Activated naive CD4-positive, alpha-beta T cell treated with anti-CD3 and anti-CD28 coated beads for 36 hours (primary cell): ENCODE measurements at regions of chr12 and their contacts with region 1.

Region 1: GRCh38 chr12:51025836-51026638 is at the start of gene SLC11A2:
- DNase-seq: peak; percentile 96
- H3K4me3 Mint-ChIP-seq: peak within 1 kb of the TSS; percentile 85
- H3K27ac Mint-ChIP-seq: peak within 1 kb of the TSS; percentile 93
- H3K4me1 Mint-ChIP-seq: peaks cover 54% of the 10 kb centered on the region
- H3K27me3 Mint-ChIP-seq: no peaks in the 10 kb centered on the region
- total RNA-seq, gene SLC11A2: 18.6 to 27.0 TPM

Region 2: GRCh38 chr12:49043856-49044258 is 1982.2 kb before region 1 on chr12:
- CTCF ChIA-PET with region 1: no interaction called
- intact Hi-C with region 1: no loop called
- DNase-seq: peak; percentile 85
- H3K4me3 Mint-ChIP-seq: no peak overlapping the region
- H3K27ac Mint-ChIP-seq: no peak overlapping the region
- H3K4me1 Mint-ChIP-seq: peaks cover 2% of the 10 kb centered on the region
- H3K27me3 Mint-ChIP-seq: no peaks in the 10 kb centered on the region

Region 3: DNA sequence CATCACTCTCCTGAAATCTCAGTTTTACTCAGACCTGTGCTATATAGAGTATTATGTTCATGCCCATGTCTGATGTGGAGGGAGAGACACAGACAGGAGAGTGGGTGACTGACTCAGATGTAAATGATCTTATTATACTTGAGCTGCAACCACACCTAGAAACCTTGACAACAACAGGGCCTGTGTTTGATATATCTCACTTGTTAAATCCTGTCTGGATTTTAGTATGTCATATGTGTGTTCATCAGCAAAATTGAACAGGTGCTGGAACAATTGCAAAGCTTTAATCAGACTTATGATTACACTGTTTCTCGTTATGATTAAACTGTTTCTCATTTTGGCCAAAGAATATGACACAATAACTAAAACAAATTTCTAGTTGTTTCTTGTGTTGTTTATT is 483.6 kb before region 1 on chr12:
- CTCF ChIA-PET with region 1: no interaction called
- intact Hi-C with region 1: loop called (anchors 1 kb)
- DNase-seq: peak; percentile 64
- H3K4me3 Mint-ChIP-seq: no peak overlapping the region
- H3K27ac Mint-ChIP-seq: peak overlapping the region; percentile 85
- H3K4me1 Mint-ChIP-seq: peaks cover 55% of the 10 kb centered on the region
- H3K27me3 Mint-ChIP-seq: no peaks in the 10 kb centered on the region

Region 4: GRCh38 chr12:50763639-50764285 is 262.3 kb before region 1 on chr12 and contains the start of gene ATF1:
- CTCF ChIA-PET with region 1: interaction called, 41 read pairs
- intact Hi-C with region 1: loop called (anchors 1 kb)
- DNase-seq: peak; percentile 91
- H3K4me3 Mint-ChIP-seq: peak within 1 kb of the TSS; percentile 83
- H3K27ac Mint-ChIP-seq: peak within 1 kb of the TSS; percentile 94
- H3K4me1 Mint-ChIP-seq: peaks cover 33% of the 10 kb centered on the region
- H3K27me3 Mint-ChIP-seq: no peaks in the 10 kb centered on the region
- total RNA-seq, gene ATF1: 43.3 to 48.5 TPM

Region 5: GRCh38 chr12:50979369-50980052 is 46.5 kb before region 1 on chr12:
- CTCF ChIA-PET with region 1: interaction called, 33 read pairs
- intact Hi-C with region 1: loop called (anchors 1 kb)
- DNase-seq: peak; percentile 73
- H3K4me3 Mint-ChIP-seq: no peak overlapping the region
- H3K27ac Mint-ChIP-seq: peak overlapping the region; percentile 93
- H3K4me1 Mint-ChIP-seq: peaks cover 25% of the 10 kb centered on the region
- H3K27me3 Mint-ChIP-seq: no peaks in the 10 kb centered on the region

Region 6: DNA sequence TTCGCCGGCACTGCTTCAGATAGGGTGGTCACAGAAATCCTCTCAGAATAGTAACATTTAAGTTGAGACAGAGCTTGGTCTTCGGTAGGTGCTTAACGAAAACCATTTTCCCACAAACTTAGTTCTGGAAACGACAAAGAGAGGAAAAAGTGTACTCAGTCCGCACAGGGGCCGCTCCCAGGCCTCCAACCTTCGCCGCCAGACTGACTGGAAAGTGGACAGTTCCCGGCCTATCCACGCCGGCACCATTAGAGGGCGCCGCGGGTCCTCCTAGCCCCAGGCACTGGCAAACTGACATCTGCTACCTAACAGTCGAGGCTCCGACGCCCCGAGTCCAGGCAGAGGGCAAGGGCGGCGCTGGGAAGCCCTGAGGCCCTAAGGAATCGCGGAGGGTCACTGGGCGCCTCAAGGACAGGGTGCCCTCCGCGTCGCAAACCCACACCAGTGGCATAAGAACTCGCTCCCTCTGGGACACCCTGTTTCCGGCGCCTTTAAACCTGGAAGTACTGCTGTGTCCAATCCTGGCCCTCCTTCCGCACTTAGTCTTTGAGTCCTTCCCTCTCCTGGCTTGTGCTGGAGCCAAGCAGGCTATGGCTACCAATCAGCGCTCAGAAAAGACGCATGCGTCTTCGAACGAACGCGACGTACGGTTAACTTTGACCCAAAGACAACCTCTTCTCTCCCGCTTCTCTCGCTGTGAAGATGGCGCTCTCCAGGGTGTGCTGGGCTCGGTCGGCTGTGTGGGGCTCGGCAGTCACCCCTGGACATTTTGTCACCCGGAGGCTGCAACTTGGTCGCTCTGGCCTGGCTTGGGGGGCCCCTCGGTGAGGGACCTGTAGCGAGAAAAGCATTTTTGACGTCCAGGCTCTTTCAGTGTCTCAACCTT is 21.9 kb after region 1 on chr12 and contains the start of gene LETMD1:
- CTCF ChIA-PET with region 1: interaction called, 3 read pairs
- intact Hi-C with region 1: loop called (anchors 1 kb)
- DNase-seq: peak; percentile 95
- H3K4me3 Mint-ChIP-seq: peak within 1 kb of the TSS; percentile 93
- H3K27ac Mint-ChIP-seq: peak within 1 kb of the TSS; percentile 93
- H3K4me1 Mint-ChIP-seq: peaks cover 34% of the 10 kb centered on the region
- H3K27me3 Mint-ChIP-seq: no peaks in the 10 kb centered on the region
- total RNA-seq, gene LETMD1: 88.7 to 89.0 TPM

Region 7: DNA sequence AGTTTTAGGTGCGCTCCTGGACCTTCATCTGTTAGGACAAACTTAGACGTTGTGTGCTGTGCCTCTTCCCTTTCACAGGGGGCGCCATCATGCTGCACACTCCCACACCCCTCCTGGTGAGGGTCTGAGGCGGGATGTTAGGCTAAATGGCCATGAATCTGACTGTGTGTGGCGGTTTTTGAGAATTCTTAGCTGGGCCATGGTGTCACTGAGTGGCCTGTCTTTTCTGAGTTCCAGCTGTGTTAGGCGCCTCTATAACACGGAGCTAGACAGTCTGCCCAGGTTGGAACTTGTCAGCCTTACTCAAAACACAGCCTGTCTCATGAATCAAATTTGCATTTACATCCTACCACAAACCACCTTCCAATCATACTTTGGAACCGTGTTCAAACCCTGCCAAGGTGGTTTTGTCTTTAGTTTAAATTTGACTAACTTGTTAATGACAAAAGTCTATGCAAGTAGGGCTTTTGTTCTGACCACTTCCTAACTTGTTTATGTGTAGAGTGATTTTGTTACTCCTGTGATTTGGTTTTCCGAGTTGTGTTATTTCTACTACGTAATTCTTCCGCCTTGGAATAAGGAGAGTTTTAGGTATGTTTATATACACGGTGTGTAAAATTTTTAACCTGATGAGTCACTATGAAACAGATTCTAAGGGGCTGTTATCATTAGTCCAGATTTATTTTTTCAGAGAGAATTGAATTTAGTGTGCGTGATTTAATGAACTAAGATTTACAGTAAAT is 945.0 kb after region 1 on chr12:
- CTCF ChIA-PET with region 1: no interaction called
- intact Hi-C with region 1: loop called (anchors 5 kb)
- DNase-seq: peak; percentile 79
- H3K4me3 Mint-ChIP-seq: peak overlapping the region; percentile 55
- H3K27ac Mint-ChIP-seq: peak overlapping the region; percentile 82
- H3K4me1 Mint-ChIP-seq: peaks cover 61% of the 10 kb centered on the region
- H3K27me3 Mint-ChIP-seq: no peaks in the 10 kb centered on the region